K562 (cell line): ENCODE measurements at regions of chr3 and their contacts with region 1.

Region 1: DNA sequence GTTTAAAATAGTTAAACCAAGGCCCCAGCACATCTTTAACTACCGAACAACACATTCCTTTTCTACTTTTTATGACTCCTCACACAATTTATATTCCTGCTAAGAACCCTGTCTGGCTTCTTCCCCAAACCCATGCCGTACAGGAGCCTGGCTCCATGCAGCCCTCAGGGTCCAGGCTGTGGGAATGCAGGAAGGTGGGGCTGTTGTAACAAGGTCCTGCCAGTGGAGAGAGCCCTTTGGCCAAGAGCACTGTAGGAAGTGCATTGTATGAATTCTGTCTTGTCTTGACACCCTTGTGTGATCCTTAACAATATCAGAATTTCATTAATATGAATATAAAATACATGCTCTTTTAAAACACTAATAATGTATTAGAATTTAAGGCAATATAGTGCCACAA is 563.8 kb downstream of the TBL1XR1 start:
- DNase-seq: peak in 3 of 4 experiments; percentile 8 to 51 (median 12)
- ATAC-seq: peak; percentile 97
- H3K4me3 ChIP-seq: no peak overlapping the region
- H3K27ac ChIP-seq: no peak overlapping the region
- H3K4me1 ChIP-seq: no peaks in the 10 kb centered on the region; a peak in 2 of 5 replicates
- H3K27me3 ChIP-seq: no peaks in the 10 kb centered on the region
- CTCF ChIP-seq: peak; percentile 28 to 51 (median 50); a peak in 5 of 6 replicates
- EP300 ChIP-seq: no peak
- POLR2A ChIP-seq: no peak
- RAD21 ChIP-seq: peak; percentile 43 to 58

Region 2: DNA sequence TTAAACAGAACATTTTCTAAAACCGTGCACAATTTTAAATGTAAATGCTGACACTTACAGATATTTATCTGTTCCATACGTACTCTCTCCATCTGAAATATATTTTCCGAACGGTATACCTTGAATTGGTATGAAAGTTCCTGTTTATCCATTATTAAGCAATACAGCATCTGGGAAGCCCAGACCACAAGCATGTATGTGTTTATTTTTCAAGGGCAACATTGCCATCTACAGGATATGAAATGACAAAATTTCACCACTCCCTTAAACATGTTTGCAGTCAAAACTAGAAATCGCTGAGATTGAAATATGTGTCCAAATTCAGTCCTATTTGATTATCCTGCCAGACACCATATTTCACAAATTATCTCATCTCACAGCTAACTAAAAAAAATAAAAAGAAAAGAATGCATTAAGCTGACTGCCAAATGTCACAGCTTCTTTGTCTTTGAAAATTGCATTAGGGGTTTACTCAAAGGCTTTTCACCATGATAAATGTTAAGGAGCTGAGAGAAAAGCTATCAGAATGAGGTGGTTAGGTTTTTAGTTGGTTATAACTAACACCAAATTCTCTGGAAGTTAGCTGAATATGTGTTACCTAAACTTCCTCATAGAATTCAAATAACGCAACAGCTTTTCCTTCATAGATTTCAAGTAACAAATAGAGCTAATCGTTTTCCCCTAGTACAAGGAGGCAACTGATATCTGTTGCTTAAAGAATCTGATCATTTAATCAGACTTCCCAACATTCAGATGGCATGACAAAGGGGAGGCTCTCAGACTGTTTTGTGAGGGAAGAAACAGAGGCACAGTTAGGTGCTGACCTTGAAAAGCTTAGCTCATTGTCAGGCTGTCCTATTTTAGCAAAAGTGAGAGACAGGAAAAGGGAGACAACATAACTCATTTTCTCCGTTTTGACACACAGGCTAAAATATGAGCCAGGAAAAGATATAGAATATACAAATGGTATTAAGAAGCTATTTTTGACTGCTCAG is 30.6 kb after region 1 on chr3:
- CTCF ChIA-PET with region 1: no interaction called
- POLR2A ChIA-PET with region 1: no interaction called
- in situ Hi-C with region 1: no loop called
- intact Hi-C with region 1: loop called (anchors 1 kb)
- DNase-seq: peak in 2 of 4 experiments; percentile 18 to 67
- ATAC-seq: peak; percentile 77
- H3K4me3 ChIP-seq: no peak overlapping the region
- H3K27ac ChIP-seq: no peak overlapping the region
- H3K4me1 ChIP-seq: peaks cover 0 to 9% of the 10 kb centered on the region in 2 experiments; a peak in 2 of 5 replicates
- H3K27me3 ChIP-seq: no peaks in the 10 kb centered on the region
- CTCF ChIP-seq: peak; percentile 30 to 66 (median 58); a peak in 5 of 6 replicates
- EP300 ChIP-seq: no peak
- POLR2A ChIP-seq: no peak
- RAD21 ChIP-seq: peak; percentile 80 to 86

Region 3: GRCh38 chr3:176690083-176690869 is 56.8 kb after region 1 on chr3:
- CTCF ChIA-PET with region 1: no interaction called
- POLR2A ChIA-PET with region 1: no interaction called
- in situ Hi-C with region 1: no loop called
- intact Hi-C with region 1: no loop called
- DNase-seq: no peak
- ATAC-seq: no peak
- H3K4me3 ChIP-seq: no peak overlapping the region
- H3K27ac ChIP-seq: no peak overlapping the region
- H3K4me1 ChIP-seq: no peaks in the 10 kb centered on the region; a peak in 1 of 5 replicates
- H3K27me3 ChIP-seq: peaks cover 0 to 5% of the 10 kb centered on the region in 2 experiments; a peak in 1 of 5 replicates
- CTCF ChIP-seq: no peak
- EP300 ChIP-seq: no peak
- POLR2A ChIP-seq: no peak
- RAD21 ChIP-seq: no peak